Vagina (tissue), 2 donors: ENCODE measurements at regions of chr4 and their contacts with region 1.

Region 1: GRCh38 chr4:121096629-121097028 is 24.3 kb upstream of the NDNF start:
- DNase-seq: no peak
- H3K4me3 ChIP-seq: no peak overlapping the region
- H3K27ac ChIP-seq: no peak overlapping the region
- H3K4me1 ChIP-seq: no peaks in the 10 kb centered on the region
- H3K27me3 ChIP-seq: no peaks in the 10 kb centered on the region
- CTCF ChIP-seq: peak in 2 of 3 experiments; percentile 27 to 31
- POLR2A ChIP-seq: no peak

Region 2: GRCh38 chr4:120156120-120156718 is 940.4 kb before region 1 on chr4:
- intact Hi-C with region 1: loop called (anchors 5 kb)
- DNase-seq: no peak
- H3K4me3 ChIP-seq: no peak overlapping the region
- H3K27ac ChIP-seq: no peak overlapping the region
- H3K4me1 ChIP-seq: no peaks in the 10 kb centered on the region
- H3K27me3 ChIP-seq: no peaks in the 10 kb centered on the region
- CTCF ChIP-seq: peak; percentile 23 to 72 (median 58)
- POLR2A ChIP-seq: no peak